Endothelial cell of umbilical vein (primary cell): ENCODE measurements at regions of chr1 and their contacts with region 1.

Region 1: GRCh38 chr1:36369061-36369861 is 16.5 kb downstream of the STK40 start:
- DNase-seq: peak; percentile 77
- H3K4me3 ChIP-seq: no peak overlapping the region
- H3K27ac ChIP-seq: peak overlapping the region; percentile 54
- H3K4me1 ChIP-seq: peaks cover 47% of the 10 kb centered on the region
- H3K27me3 ChIP-seq: no peaks in the 10 kb centered on the region
- CTCF ChIP-seq: peak; percentile 89 to 91
- POLR2A ChIP-seq: no peak

Region 2: GRCh38 chr1:36099681-36100341 is 269.4 kb before region 1 on chr1:
- CTCF ChIA-PET with region 1: interaction called, 4 read pairs
- POLR2A ChIA-PET with region 1: no interaction called
- dilution Hi-C with region 1: no loop called
- intact Hi-C with region 1: loop called (anchors 1 kb)
- DNase-seq: peak; percentile 65
- H3K4me3 ChIP-seq: no peak overlapping the region
- H3K27ac ChIP-seq: no peak overlapping the region
- H3K4me1 ChIP-seq: no peaks in the 10 kb centered on the region
- H3K27me3 ChIP-seq: no peaks in the 10 kb centered on the region
- CTCF ChIP-seq: peak; percentile 84
- POLR2A ChIP-seq: no peak

Region 3: DNA sequence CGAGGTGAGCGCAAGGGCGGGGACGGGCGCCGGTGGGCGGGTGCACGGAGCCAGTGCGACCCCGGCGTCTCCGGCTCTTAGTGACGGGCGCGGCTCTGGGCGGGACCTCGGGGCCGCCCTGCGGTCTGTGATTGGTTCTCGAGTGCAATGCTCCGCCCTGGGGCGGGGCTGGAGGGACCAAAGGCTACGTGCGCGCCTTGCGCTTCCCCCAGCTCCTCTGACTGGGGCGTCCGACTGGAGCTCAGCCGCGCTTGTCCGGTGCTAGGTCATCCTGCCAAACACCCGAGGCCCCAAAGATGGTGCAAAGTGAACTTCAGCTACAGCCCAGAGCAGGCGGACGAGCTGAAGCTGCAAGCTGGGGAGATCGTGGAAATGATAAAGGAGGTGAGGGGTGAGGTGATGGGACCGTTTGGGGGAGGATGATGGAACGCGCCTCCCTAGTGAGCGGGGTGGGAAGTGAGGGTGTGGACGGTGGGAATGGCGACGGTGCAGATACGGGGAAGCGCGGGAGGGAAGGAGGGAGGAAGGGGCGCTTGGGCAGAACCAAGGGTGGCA is 62.3 kb before region 1 on chr1:
- CTCF ChIA-PET with region 1: interaction called, 8 read pairs
- POLR2A ChIA-PET with region 1: no interaction called
- dilution Hi-C with region 1: no loop called
- intact Hi-C with region 1: loop called (anchors 1 kb)
- DNase-seq: peak; percentile 97
- H3K4me3 ChIP-seq: peak overlapping the region; percentile 43 to 52 (median 52)
- H3K27ac ChIP-seq: peak overlapping the region; percentile 16
- H3K4me1 ChIP-seq: peaks cover 15% of the 10 kb centered on the region
- H3K27me3 ChIP-seq: no peaks in the 10 kb centered on the region
- CTCF ChIP-seq: no peak
- POLR2A ChIP-seq: peak; percentile 95

Region 4: DNA sequence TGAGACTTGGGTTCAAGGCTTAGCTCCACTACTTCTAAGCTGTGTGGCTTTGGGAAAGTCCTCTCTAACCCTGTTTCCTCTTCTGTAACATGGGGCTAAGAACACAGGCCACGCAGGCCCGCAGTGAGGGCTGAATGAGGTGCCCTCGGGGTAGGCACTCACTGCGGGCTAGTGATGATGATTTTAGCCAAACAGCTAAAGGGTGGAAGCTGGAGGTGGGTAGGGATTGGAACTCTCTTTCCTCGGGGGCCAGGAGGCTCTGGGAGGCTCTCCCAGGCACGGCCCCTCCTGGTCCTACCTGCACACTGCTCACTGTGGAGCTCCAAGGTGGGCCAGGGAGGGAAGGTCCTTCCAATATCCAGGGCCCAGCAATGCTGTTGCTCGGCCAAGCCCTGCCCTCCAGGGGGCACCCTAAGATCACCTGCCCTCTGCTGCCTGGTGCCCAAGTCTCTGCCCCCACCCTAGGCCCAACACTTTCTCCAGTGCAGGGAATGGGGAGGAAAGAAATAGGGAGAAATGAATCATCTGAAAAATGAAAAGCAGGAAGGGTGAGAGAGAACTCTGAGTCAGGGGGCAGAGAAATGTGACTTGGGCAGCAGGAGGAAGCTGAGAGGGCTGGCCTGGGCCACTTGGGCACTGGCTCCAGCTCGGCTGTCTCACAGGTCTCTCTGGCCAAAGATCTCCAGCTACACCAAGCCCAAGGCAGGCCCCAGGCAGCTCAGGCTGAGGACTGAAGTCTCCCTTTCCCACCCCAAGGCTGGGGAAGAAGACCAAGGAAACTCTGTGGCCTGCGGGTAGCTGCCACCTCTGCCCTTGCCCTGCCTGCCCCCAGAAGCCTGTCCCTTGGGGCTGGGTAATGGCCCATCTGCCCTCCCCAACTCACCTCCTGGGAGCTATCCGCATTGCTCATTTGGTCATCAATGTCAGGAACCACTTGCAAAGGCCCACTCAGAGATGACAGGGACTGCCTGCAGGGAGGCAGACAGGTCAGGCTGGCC is 26.5 kb before region 1 on chr1:
- CTCF ChIA-PET with region 1: interaction called, 152 read pairs
- POLR2A ChIA-PET with region 1: interaction called, 4 read pairs
- dilution Hi-C with region 1: no loop called
- intact Hi-C with region 1: loop called (anchors 1 kb)
- DNase-seq: peak; percentile 95
- H3K4me3 ChIP-seq: no peak overlapping the region
- H3K27ac ChIP-seq: peak overlapping the region; percentile 85
- H3K4me1 ChIP-seq: peaks cover 28% of the 10 kb centered on the region
- H3K27me3 ChIP-seq: no peaks in the 10 kb centered on the region
- CTCF ChIP-seq: peak; percentile 88 to 89
- POLR2A ChIP-seq: peak; percentile 49

Region 5: DNA sequence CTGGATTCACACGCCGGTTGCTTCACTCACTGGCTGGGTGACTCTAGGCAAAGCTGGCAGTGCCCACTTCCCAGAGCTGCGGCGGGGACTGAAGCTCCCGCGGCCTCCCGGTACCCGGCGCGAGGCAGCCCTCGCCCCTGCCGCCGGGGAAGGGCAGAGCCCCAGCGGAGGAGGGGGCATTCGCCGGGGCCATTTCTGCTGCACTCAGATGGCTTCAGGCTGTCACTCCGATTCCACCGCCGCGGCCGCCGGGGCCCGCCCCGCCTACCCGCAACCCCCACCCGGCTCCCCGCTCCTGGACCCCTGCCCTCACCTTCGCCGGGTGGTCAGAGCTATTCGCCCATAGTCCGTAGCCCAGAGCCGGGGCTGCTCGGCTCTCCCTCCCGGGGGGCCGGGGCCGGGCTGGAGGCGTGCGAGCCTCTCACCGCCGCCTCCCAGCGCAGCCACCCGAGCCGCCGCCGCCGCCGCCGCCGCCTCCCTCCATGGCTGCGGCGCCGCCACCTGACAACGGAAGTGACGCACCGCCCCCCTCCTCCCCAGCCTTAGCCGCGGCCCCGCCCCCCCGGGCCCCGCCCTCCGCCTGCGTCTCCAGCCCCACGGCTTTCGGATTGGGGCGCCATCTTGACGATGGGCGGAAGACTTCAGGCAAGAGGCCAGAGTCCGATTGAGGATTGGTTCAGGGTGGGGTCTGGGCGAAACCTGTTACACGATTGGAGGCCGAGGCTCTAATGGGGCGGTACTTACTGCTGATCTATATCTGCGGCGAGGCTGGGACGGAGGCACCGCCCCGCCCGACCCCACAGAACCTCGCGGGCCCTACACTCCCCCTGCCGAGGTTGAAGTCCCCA is 16.4 kb after region 1 on chr1 and contains the start of gene STK40:
- CTCF ChIA-PET with region 1: interaction called, 14 read pairs
- POLR2A ChIA-PET with region 1: interaction called, 5 read pairs
- dilution Hi-C with region 1: no loop called
- intact Hi-C with region 1: no loop called
- DNase-seq: peak; percentile 99
- H3K4me3 ChIP-seq: peak within 1 kb of the TSS; percentile 80 to 90 (median 83)
- H3K27ac ChIP-seq: peak within 1 kb of the TSS; percentile 97
- H3K4me1 ChIP-seq: peaks cover 24% of the 10 kb centered on the region
- H3K27me3 ChIP-seq: no peaks in the 10 kb centered on the region
- CTCF ChIP-seq: no peak
- POLR2A ChIP-seq: no peak
- total RNA-seq, gene STK40: 35.2 and 36.8 TPM in 2 replicates

Region 6: GRCh38 chr1:36463803-36464604 is 94.7 kb after region 1 on chr1 and contains the start of gene MRPS15:
- CTCF ChIA-PET with region 1: no interaction called
- POLR2A ChIA-PET with region 1: no interaction called
- dilution Hi-C with region 1: no loop called
- intact Hi-C with region 1: no loop called
- DNase-seq: peak; percentile 94
- H3K4me3 ChIP-seq: peak within 1 kb of the TSS; percentile 63 to 86 (median 85)
- H3K27ac ChIP-seq: peak within 1 kb of the TSS; percentile 87
- H3K4me1 ChIP-seq: peaks cover 10% of the 10 kb centered on the region
- H3K27me3 ChIP-seq: no peaks in the 10 kb centered on the region
- CTCF ChIP-seq: no peak
- POLR2A ChIP-seq: peak; percentile 89
- total RNA-seq, gene MRPS15: 105 and 106 TPM in 2 replicates